Activated B cell treated with CpG ODN at 0.5 μM for 24 hours (primary cell): ENCODE measurements at regions of chr2 and their contacts with region 1.

Region 1: GRCh38 chr2:152627351-152627957 is 89.8 kb downstream of the PRPF40A start:
- DNase-seq: no peak
- ATAC-seq: no peak
- H3K4me3 Mint-ChIP-seq: no peak overlapping the region
- H3K27ac Mint-ChIP-seq: no peak overlapping the region
- H3K4me1 Mint-ChIP-seq: no peaks in the 10 kb centered on the region
- H3K27me3 Mint-ChIP-seq: no peaks in the 10 kb centered on the region
- CTCF ChIP-seq: no peak

Region 2: GRCh38 chr2:152036611-152037469 is 590.6 kb before region 1 on chr2:
- CTCF ChIA-PET with region 1: interaction called, 3 read pairs
- POLR2A ChIA-PET with region 1: no interaction called
- intact Hi-C with region 1: loop called (anchors 2 kb)
- DNase-seq: peak; percentile 19
- ATAC-seq: peak; percentile 50
- H3K4me3 Mint-ChIP-seq: no peak overlapping the region
- H3K27ac Mint-ChIP-seq: no peak overlapping the region
- H3K4me1 Mint-ChIP-seq: no peaks in the 10 kb centered on the region
- H3K27me3 Mint-ChIP-seq: no peaks in the 10 kb centered on the region
- CTCF ChIP-seq: peak; percentile 52

Region 3: DNA sequence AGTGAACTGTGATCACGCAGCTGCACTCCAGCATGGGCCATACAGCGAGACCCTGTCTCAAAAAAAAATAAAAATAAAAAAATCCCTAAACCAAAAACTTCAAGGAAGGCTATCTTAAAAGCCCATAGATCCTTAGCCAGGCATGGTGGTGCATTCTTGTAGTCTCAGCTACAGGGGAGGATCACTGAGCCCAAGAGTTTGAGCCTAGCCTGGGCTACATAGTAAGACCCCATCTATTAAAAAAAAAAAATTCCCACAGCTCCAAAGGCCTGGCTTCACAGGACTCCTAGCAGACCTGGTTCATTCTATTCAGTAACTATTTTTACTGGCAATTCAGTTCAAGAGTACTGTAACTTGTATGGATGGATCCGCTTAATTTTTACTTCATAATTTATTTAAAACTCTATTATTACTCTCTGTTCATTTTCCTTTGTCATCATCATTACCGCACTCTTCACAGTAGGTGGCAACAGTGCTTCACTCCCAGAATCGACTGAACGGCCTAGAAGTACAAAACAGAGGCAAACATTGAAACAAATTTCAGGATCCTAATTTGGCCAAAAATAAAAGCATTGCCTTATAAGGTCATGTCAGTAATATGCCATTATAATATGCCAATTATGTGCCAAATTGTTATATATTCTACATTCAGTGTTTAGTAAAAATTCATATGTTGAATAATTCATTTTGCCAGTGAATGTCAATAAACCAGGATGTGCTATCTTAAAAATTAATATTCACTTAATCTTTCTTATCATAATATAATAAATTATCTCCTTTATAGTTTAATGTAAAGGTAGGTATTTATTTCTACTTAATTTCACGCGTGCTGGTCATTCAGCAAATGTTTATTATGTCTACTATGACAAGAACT is 437.6 kb before region 1 on chr2:
- CTCF ChIA-PET with region 1: no interaction called
- POLR2A ChIA-PET with region 1: no interaction called
- intact Hi-C with region 1: loop called (anchors 1 kb)
- DNase-seq: no peak
- ATAC-seq: peak; percentile 71
- H3K4me3 Mint-ChIP-seq: no peak overlapping the region
- H3K27ac Mint-ChIP-seq: no peak overlapping the region
- H3K4me1 Mint-ChIP-seq: no peaks in the 10 kb centered on the region
- H3K27me3 Mint-ChIP-seq: peaks cover 22% of the 10 kb centered on the region
- CTCF ChIP-seq: no peak